ENCODE measurements at regions of chr11 and their contacts with region 1.

Region 1: DNA sequence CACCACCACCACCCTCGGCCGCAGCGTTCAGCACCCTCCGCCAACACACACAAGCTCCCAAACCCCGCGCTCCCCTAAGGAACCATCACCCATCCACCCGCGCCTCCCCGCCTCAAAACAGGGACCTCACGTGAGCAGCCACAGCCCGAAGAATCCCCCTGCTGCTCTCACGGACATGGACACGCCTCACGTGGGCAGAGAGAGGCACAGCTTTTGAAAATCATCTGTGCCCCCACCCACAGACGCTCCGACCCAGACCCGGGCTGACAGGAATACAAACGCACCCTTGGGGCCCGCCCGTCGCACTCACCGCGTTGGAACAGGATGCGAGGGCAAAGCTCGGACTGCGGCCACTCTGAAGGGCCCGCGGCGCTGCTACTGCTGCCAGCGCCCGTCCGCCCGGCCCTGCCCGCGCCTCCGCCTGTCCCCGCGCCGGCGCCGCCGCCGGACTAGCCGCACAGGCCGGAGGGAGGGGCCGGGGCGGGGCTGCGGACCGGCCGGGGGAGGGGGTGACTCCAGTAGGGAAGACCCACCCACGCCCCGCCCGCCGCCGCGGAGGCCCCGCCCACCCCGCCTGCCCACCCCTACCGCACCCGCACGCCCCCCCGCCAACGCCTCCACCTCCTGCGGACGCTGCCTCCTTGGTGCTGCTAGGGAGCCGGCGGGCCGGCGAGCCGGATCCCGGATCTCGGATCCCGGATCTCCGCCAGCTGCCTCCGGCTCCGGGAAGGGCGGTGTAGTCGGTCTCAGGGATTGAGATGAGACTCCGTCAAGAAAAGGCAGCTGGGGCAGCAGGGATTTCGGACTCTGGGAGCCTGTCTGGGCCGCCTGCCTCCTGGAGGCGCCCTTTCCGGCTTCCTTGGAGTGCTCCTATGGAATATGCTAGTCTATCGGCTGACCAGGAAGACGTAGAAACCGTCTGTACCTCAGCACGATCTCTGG is at the start of gene TRIM3:
- DNase-seq: peak; percentile 96
- H3K4me3 ChIP-seq: peak within 1 kb of the TSS; percentile 58
- H3K27ac ChIP-seq: peak within 1 kb of the TSS; percentile 92
- H3K4me1 ChIP-seq: peaks cover 9% of the 10 kb centered on the region
- H3K27me3 ChIP-seq: no peaks in the 10 kb centered on the region
- CTCF ChIP-seq: no peak
- total RNA-seq, gene TRIM3: 30.0 to 59.0 TPM

Region 2: GRCh38 chr11:6234387-6235107 is 239.2 kb before region 1 on chr11 and contains the start of gene FHIP1B:
- intact Hi-C with region 1: loop called (anchors 10 kb)
- DNase-seq: peak; percentile 100
- H3K4me3 ChIP-seq: peak within 1 kb of the TSS; percentile 64
- H3K27ac ChIP-seq: peak within 1 kb of the TSS; percentile 93
- H3K4me1 ChIP-seq: peaks cover 4% of the 10 kb centered on the region
- H3K27me3 ChIP-seq: no peaks in the 10 kb centered on the region
- CTCF ChIP-seq: no peak
- total RNA-seq, gene FHIP1B: 84.6 to 107 TPM

Region 3: DNA sequence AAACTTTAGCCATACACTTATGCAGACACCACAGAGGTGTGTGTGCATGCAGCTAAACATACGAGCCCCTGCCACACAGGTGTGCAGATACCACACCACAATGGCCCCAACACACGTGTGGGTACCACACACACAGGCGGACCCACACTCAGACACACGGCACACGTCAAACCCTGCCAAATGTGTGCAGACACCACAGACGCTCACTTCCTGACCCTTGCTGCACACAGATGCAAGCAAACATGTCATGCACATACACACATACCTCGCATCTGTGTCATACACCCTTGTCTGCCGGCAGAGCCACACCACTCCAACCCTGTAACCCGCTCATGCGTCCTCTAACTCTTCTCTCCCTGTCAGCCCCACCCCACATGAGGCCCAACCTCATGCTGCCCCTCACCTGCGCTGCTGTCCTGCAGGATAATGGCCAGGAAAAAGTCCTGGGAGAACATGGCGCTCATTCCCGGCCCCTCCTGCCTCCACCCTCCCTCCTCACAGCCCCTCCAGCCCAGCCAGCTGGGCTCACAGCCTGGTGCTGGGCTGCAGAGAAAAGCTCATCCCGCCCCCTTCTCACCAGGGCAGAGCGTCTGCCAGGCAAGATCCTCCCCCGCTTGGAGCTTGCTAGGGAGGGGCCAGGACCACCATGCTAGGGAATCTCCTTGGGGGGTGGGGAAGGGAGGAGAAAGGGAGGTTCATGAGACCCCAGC is 69.3 kb before region 1 on chr11:
- intact Hi-C with region 1: no loop called
- DNase-seq: no peak
- H3K4me3 ChIP-seq: no peak overlapping the region
- H3K27ac ChIP-seq: no peak overlapping the region
- H3K4me1 ChIP-seq: no peaks in the 10 kb centered on the region
- H3K27me3 ChIP-seq: no peaks in the 10 kb centered on the region
- CTCF ChIP-seq: no peak

Region 4: DNA sequence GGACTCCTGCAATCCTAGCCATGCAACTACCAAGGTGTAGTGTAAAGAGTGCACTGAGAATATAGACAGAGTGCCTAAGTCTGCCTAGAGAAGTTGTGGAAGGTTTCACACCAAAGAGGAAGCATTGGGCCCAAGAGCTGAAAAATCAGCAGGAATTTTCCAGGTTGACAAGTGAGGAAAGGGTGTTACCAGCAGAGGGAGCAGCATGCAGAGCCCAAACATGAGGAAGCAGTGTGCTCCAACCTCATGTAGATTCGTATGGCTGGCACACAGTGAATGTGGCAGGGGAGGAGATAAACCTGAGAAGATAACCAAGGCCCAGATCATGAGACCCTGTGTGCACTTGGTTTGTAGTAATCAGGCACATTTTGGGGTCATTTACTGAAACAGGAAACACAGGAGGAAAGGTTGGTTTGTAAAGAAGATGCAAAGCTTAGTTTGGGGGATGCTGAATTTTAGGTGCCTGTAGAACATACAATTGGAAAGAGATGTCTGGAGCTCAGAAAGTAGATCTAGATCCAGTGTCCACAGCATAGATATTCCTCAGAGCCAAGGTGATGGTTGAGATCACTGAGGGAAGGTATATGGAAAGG is 34.7 kb before region 1 on chr11:
- intact Hi-C with region 1: no loop called
- DNase-seq: peak; percentile 70
- H3K4me3 ChIP-seq: no peak overlapping the region
- H3K27ac ChIP-seq: no peak overlapping the region
- H3K4me1 ChIP-seq: no peaks in the 10 kb centered on the region
- H3K27me3 ChIP-seq: no peaks in the 10 kb centered on the region
- CTCF ChIP-seq: peak; percentile 68

Region 5: GRCh38 chr11:6627762-6628241 is 154.1 kb after region 1 on chr11:
- intact Hi-C with region 1: no loop called
- DNase-seq: no peak
- H3K4me3 ChIP-seq: no peak overlapping the region
- H3K27ac ChIP-seq: no peak overlapping the region
- H3K4me1 ChIP-seq: no peaks in the 10 kb centered on the region
- H3K27me3 ChIP-seq: no peaks in the 10 kb centered on the region
- CTCF ChIP-seq: no peak